Activated CD4-positive, alpha-beta T cell treated with anti-CD3 and anti-CD28 coated beads, Interleukin-2, amount 10 ng/mL, durations not matched to agents 24 days and 14 days (primary cell): ENCODE measurements at regions of chr6 and their contacts with region 1.

Region 1: GRCh38 chr6:152863618-152864326 is 113.2 kb downstream of the VIP start:
- DNase-seq: peak; percentile 88
- H3K4me3 Mint-ChIP-seq: no peak overlapping the region
- H3K27ac Mint-ChIP-seq: no peak overlapping the region
- H3K4me1 Mint-ChIP-seq: no peaks in the 10 kb centered on the region
- H3K27me3 Mint-ChIP-seq: peaks cover 7% of the 10 kb centered on the region

Region 2: DNA sequence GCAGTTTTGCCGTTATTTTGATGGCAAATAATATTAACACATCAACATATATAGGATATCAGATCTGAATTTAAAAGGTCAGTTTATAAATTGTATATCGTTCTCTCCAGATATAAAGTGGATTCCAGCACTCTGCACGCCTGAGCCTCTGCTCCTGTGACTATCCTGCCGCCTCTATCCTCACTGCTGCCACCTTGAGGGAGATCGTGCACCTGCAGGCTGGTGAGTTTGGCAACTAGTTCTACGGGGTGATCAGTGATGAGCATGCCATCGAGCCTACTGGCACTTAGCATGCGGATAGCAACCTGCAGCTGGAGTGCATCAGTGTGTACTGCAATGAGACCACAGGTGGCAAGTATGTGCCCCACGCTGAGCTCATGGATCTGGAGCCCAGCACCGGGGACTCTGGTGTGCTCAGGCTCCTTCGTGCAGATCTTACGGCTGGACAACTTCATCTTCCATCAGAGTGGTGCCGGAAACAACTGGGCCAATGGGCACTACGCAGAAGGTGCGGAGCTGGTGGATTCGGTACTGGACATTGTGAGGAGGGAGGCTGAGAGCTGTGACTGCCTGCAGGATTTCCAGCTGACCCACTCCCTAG is 34.1 kb after region 1 on chr6:
- intact Hi-C with region 1: loop called (anchors 2 kb)
- DNase-seq: peak; percentile 91
- H3K4me3 Mint-ChIP-seq: no peak overlapping the region
- H3K27ac Mint-ChIP-seq: no peak overlapping the region
- H3K4me1 Mint-ChIP-seq: peaks cover 3% of the 10 kb centered on the region
- H3K27me3 Mint-ChIP-seq: peaks cover 21% of the 10 kb centered on the region

Region 3: GRCh38 chr6:152948150-152948768 is 84.5 kb after region 1 on chr6:
- intact Hi-C with region 1: loop called (anchors 1 kb)
- DNase-seq: peak; percentile 65
- H3K4me3 Mint-ChIP-seq: no peak overlapping the region
- H3K27ac Mint-ChIP-seq: no peak overlapping the region
- H3K4me1 Mint-ChIP-seq: peaks cover 8% of the 10 kb centered on the region
- H3K27me3 Mint-ChIP-seq: peaks cover 31% of the 10 kb centered on the region

Region 4: DNA sequence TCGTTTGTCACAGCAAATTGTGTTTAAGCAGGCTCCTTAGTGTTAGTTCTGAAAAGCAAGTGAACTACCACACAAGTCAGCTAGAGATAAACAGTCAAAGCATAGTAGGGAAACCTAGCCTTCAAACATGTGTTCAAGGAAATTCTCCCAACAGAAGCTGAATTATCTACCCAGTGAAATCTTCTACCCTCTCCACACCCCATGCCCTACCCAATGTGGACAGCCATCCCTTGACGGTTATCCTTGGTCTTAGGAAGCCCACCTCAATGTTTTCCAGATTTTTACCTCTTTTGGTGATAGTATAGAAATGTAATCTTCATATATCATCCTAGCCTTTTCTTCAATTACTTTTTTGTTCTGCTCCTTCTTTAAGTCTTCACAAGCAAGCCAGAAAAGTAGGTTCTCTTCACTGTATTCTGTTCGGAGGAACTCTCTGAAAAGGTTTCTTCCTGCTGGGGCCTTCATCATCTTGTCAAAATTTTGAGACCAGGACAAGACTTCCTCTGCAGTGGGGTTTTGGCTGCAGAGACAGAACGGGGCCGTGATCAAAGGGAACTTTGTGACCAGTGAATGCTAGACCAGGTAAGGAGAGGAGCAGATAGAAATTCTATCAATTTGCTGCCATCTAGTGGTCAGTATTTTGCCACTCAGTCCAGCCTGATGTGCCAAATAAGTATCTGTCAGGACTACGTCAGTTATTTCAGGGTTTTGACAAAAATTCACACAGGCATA is 160.4 kb after region 1 on chr6:
- intact Hi-C with region 1: loop called (anchors 1 kb)
- DNase-seq: peak; percentile 84
- H3K4me3 Mint-ChIP-seq: no peak overlapping the region
- H3K27ac Mint-ChIP-seq: no peak overlapping the region
- H3K4me1 Mint-ChIP-seq: no peaks in the 10 kb centered on the region
- H3K27me3 Mint-ChIP-seq: peaks cover 35% of the 10 kb centered on the region

Region 5: DNA sequence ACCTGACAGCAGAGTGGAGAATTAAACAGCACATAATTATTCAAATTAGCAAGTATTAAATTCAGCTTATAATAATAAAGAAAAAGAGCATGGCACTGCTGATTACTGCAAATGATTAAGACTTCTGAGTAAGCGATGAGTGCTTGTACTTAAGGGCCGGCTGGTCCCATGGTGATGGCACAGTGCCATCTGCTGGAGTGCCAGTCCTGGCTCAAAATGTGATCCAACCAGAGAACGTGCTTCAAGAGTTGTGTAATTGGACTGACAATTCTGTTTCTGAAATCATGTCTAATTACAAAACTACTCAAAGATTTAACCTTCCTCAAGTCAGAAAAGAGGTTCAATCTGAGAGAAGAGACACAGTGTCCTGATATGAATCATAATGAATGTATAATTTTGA is 448.9 kb after region 1 on chr6:
- intact Hi-C with region 1: loop called (anchors 10 kb)
- DNase-seq: peak; percentile 72
- H3K4me3 Mint-ChIP-seq: no peak overlapping the region
- H3K27ac Mint-ChIP-seq: no peak overlapping the region
- H3K4me1 Mint-ChIP-seq: no peaks in the 10 kb centered on the region
- H3K27me3 Mint-ChIP-seq: no peaks in the 10 kb centered on the region